Upper lobe of right lung (tissue), 1 donor: ENCODE measurements at regions of chr19 and their contacts with region 1.

Region 1: GRCh38 chr19:17390665-17391370 is 3.2 kb downstream of the CCDC194 start:
- DNase-seq: peak; percentile 96
- ATAC-seq: peak; percentile 98
- H3K4me3 ChIP-seq: peak overlapping the region; percentile 51
- H3K27ac ChIP-seq: peak overlapping the region; percentile 47
- H3K4me1 ChIP-seq: peaks cover 12% of the 10 kb centered on the region
- H3K27me3 ChIP-seq: peaks cover 5% of the 10 kb centered on the region
- CTCF ChIP-seq: peak; percentile 68

Region 2: GRCh38 chr19:17275461-17276175 is 115.2 kb before region 1 on chr19:
- intact Hi-C with region 1: no loop called
- DNase-seq: no peak
- ATAC-seq: no peak
- H3K4me3 ChIP-seq: no peak overlapping the region
- H3K27ac ChIP-seq: no peak overlapping the region
- H3K4me1 ChIP-seq: no peaks in the 10 kb centered on the region
- H3K27me3 ChIP-seq: no peaks in the 10 kb centered on the region
- CTCF ChIP-seq: no peak

Region 3: GRCh38 chr19:17346109-17346671 is 44.6 kb before region 1 on chr19:
- intact Hi-C with region 1: loop called (anchors 5 kb)
- DNase-seq: peak; percentile 87
- ATAC-seq: peak; percentile 95
- H3K4me3 ChIP-seq: no peak overlapping the region
- H3K27ac ChIP-seq: no peak overlapping the region
- H3K4me1 ChIP-seq: peaks cover 12% of the 10 kb centered on the region
- H3K27me3 ChIP-seq: no peaks in the 10 kb centered on the region
- CTCF ChIP-seq: peak; percentile 98

Region 4: GRCh38 chr19:17436094-17436873 is 45.5 kb after region 1 on chr19:
- intact Hi-C with region 1: no loop called
- DNase-seq: no peak
- ATAC-seq: no peak
- H3K4me3 ChIP-seq: no peak overlapping the region
- H3K27ac ChIP-seq: no peak overlapping the region
- H3K4me1 ChIP-seq: no peaks in the 10 kb centered on the region
- H3K27me3 ChIP-seq: no peaks in the 10 kb centered on the region
- CTCF ChIP-seq: no peak

Region 5: DNA sequence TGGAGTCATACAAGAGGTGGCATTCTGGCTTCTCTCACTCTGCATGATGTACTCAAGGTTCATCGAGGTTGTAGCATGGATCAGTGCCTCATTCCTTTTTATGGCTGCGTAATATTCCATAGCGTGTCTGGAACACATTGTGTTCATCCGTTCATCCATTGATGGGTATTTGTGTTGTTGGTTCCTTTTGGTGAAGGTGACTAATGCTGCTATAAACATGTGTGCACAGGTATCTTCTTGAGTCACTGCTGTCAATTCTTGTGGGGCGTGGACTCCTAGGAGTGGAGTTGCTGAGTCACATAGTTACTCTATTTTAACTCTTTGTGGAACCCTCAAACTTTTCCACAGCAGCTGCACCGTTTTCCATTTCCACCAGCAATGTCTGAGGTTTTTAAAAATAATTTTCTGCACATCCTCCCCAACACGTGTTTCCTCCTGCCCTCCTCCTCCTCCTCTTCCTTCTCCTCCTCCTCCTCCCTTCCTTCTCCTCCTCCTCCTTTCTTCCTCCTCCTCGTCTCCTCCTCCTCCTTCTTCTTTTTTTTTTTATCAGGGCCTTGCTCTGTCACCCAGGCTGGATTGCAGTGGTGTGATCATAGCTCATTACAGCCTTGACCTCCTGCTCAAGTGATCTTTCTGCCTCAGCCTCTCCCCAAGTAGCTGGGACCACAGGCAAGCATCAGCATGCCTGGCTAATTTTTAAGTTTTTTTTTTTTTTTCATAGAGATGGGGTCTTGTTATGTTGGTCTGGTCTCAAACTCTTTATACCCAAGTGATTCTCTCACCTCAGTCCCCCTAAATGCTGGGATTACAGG is 59.7 kb after region 1 on chr19:
- intact Hi-C with region 1: loop called (anchors 10 kb)
- DNase-seq: no peak
- ATAC-seq: no peak
- H3K4me3 ChIP-seq: no peak overlapping the region
- H3K27ac ChIP-seq: no peak overlapping the region
- H3K4me1 ChIP-seq: no peaks in the 10 kb centered on the region
- H3K27me3 ChIP-seq: peaks cover 42% of the 10 kb centered on the region
- CTCF ChIP-seq: no peak

Region 6: GRCh38 chr19:17470068-17470841 is 79.4 kb after region 1 on chr19 and contains the start of gene SLC27A1:
- intact Hi-C with region 1: no loop called
- DNase-seq: peak; percentile 99
- ATAC-seq: peak; percentile 92
- H3K4me3 ChIP-seq: peak within 1 kb of the TSS; percentile 78
- H3K27ac ChIP-seq: peak within 1 kb of the TSS; percentile 91
- H3K4me1 ChIP-seq: peaks cover 31% of the 10 kb centered on the region
- H3K27me3 ChIP-seq: no peaks in the 10 kb centered on the region
- CTCF ChIP-seq: no peak
- total RNA-seq, gene SLC27A1: 27.8 TPM